ENCODE measurements at regions of chr6 and their contacts with region 1.

Region 1: DNA sequence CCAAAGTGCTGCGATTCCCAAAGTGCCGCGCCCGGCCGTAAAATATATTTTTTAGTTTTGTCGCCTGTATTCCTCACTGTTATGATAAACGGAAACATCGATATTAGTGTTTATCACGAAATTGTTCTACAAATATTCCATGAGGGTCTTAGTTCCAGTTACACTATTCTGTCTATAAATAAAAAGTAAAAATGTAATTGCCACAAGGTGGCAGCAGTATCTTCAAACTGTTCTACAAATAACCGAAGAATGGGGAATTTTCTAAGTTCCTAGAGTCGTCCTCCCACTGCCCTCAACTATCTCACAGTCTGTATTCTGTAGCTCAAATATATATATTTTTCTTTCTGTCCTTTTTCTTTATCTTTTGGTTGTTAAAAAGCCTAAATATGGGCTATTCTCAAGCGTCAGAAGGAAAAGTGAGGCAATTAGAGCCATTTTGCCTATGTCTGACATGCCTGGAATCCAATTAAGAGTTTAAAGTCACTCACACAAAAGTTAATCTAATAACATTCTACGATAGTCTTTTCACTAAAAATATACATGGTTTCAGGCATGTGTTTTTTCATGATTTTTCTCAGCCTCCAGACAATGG is 14.2 kb upstream of the FAM162B start:
- DNase-seq: no peak
- H3K4me3 ChIP-seq: peak overlapping the region; percentile 32
- H3K27ac ChIP-seq: no peak overlapping the region
- H3K4me1 ChIP-seq: peaks cover 4% of the 10 kb centered on the region
- H3K27me3 ChIP-seq: peaks cover 11% of the 10 kb centered on the region
- CTCF ChIP-seq: peak; percentile 57

Region 2: DNA sequence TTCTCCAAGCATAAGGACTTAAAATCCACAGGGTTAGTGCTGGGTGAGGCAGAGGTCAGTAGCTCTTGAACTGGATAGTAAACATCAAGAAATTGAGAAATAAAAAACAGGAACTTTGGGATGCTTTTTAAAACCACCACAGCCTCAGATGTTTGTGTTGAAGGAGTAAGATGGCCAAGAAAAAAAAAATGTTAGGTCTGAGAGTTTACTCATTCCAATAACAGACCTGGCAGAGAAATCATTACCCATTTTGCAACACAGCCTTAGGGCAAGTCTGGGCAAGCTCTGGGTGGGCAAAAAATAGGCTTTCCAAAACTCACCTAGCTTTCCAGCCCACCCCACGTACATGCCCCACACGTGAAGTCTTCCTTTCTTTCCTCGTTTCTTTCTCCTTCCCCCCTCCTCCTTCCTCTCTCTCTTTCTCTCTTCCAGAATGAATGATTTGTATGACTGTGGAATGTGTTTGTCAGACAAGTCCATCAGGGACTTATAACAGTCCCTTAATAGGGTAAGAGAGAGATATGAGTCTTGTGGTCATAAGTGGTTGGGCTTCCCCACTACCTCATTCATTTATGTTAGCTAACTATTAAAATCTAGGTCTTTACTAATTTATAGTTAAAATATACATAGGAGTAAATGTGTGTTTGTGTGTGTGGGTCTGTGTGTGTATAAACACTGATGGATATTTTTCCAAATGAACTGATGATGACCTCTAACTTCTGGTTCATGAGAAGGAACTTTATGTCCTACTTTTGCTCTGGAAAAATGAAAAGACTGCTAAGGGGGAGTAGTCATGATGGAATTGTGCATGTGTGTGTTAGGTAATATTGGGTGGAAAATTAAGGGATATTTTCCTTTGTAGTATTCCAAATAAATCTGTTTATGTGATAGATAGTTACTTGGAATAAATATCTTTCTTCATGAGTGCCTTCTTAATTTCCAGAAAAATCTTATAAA is 426.9 kb before region 1 on chr6:
- intact Hi-C with region 1: no loop called
- DNase-seq: no peak
- H3K4me3 ChIP-seq: no peak overlapping the region
- H3K27ac ChIP-seq: peak overlapping the region; percentile 64
- H3K4me1 ChIP-seq: peaks cover 12% of the 10 kb centered on the region
- H3K27me3 ChIP-seq: no peaks in the 10 kb centered on the region
- CTCF ChIP-seq: no peak

Region 3: DNA sequence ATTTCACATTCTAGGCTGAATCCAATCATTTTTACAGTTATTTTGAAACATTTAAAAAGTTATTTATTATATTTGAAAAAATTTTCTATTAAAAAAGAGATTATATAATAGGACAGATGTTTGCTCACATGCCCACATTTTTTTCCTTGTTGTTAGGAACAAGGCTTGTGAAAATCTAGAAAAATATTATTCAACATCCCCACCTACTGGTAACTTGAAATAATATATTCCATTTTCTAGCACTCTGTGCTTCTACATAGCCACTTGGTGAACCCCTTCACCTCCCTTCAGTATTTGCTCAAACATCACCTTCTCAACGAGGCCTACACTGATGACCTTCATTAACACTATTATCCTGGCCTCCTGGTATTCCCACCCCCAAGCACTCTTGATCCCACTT is 67.6 kb after region 1 on chr6:
- intact Hi-C with region 1: loop called (anchors 10 kb)
- DNase-seq: no peak
- H3K4me3 ChIP-seq: no peak overlapping the region
- H3K27ac ChIP-seq: no peak overlapping the region
- H3K4me1 ChIP-seq: no peaks in the 10 kb centered on the region
- H3K27me3 ChIP-seq: no peaks in the 10 kb centered on the region
- CTCF ChIP-seq: peak; percentile 28

Region 4: GRCh38 chr6:116963972-116964371 is 184.3 kb after region 1 on chr6:
- intact Hi-C with region 1: loop called (anchors 5 kb)
- DNase-seq: no peak
- H3K4me3 ChIP-seq: no peak overlapping the region
- H3K27ac ChIP-seq: no peak overlapping the region
- H3K4me1 ChIP-seq: no peaks in the 10 kb centered on the region
- H3K27me3 ChIP-seq: peaks cover 29% of the 10 kb centered on the region
- CTCF ChIP-seq: no peak

Measured in left ventricle myocardium inferior (tissue), 1 donor.